Colonic mucosa (tissue), 4 donors: ENCODE measurements at regions of chr17 and their contacts with region 1.

Region 1: DNA sequence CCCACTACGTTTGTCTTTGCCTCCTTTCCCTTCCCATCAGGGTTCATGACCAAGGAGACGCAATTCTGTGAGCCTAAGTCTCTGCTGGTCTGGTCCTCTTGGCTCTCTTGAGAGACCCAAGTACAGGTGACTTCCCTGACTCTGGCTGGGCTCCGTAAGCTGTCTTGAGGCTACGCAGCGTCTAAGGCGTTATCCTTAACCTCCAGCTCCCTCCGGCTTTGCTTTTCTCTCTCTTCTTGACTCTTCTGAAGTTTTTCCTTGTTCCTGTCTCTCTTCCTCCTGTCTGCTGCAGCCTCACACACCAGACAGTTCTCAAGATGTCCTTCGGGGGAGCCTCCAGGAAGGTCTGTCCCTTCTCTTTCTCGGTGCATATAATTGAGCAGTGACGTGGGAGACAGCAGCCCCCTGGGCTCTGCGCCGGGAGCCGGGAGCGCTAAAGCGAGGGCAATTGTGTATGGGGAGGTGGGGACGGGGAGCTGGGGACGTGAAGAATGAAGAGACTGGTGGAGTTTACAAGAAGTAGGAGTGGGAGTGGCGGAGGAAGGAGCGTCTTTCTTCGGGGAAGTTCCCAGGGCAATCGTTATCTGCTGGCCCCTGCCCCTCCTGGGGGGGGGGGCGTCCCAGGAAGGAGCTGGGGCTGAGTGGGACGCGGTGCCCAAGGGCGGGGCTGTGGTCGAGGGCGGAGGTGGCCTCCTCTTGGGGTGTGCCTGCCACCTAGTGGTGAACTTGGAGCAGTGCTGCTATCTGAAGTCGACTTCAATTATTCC is 6.9 kb upstream of the PIRT start:
- DNase-seq: peak; percentile 90
- H3K4me3 ChIP-seq: peak overlapping the region; percentile 38
- H3K27ac ChIP-seq: peak overlapping the region; percentile 85
- H3K4me1 ChIP-seq: no peaks in the 10 kb centered on the region
- H3K27me3 ChIP-seq: no peaks in the 10 kb centered on the region
- CTCF ChIP-seq: peak; percentile 96

Region 2: DNA sequence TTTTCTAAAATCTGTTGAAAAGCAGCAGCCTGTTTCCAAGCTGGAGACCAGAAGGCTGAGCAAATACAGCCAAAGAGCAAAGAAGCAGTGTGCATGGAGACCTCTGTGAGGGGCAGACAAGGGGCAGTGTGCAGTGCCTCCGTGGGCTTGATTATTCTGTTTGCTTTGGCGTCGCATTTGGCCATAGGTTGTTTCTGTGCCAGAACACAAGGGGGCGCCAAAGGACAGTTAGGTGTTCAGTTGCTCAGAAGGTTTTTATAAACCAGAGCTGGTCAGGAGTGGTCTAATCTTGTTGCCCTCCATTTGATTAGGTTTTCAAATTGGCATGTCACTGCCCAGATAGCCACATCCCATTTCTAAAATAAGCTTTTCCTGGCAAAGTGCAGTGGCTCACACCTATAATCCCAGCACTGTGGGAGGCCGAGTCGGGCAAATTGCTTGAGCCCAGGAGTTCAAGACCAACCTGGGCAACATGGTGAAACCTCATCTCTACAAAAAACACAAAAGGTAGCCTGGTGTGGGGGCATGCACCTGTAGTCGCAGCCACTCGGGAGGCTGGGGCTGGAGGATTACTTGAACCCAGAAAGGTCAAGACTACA is 198.3 kb before region 1 on chr17:
- intact Hi-C with region 1: loop called (anchors 5 kb)
- DNase-seq: peak; percentile 74
- H3K4me3 ChIP-seq: no peak overlapping the region
- H3K27ac ChIP-seq: no peak overlapping the region
- H3K4me1 ChIP-seq: no peaks in the 10 kb centered on the region
- H3K27me3 ChIP-seq: no peaks in the 10 kb centered on the region
- CTCF ChIP-seq: peak; percentile 78

Region 3: DNA sequence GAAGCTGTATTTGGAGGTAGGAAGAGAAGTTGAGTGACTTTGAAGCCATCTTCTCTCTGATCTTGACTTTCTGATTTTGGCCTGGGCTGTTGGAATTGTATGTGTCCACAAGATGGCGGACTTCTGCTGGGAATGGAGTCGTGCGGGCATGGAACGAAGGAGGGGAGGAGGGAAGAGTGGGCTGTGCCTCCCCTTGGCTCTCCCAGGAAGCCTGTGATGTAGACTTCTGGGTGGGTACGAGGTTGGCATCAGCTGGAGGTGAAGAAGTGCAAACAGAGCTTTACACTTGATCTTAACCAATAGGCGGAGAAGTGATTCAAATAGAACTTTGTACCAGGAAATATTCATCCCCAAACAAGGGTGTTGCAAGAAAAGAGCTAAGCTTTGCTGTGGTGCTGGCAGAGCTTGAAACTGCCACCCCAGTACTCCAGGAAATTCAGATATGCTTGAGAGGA is 107.6 kb before region 1 on chr17:
- intact Hi-C with region 1: loop called (anchors 1 kb)
- DNase-seq: peak; percentile 91
- H3K4me3 ChIP-seq: no peak overlapping the region
- H3K27ac ChIP-seq: peak overlapping the region; percentile 92
- H3K4me1 ChIP-seq: peaks cover 2% of the 10 kb centered on the region
- H3K27me3 ChIP-seq: no peaks in the 10 kb centered on the region
- CTCF ChIP-seq: peak; percentile 76

Region 4: GRCh38 chr17:10768750-10769251 is 76.0 kb before region 1 on chr17:
- intact Hi-C with region 1: loop called (anchors 5 kb)
- DNase-seq: no peak
- H3K4me3 ChIP-seq: no peak overlapping the region
- H3K27ac ChIP-seq: no peak overlapping the region
- H3K4me1 ChIP-seq: no peaks in the 10 kb centered on the region
- H3K27me3 ChIP-seq: no peaks in the 10 kb centered on the region
- CTCF ChIP-seq: no peak

Region 5: DNA sequence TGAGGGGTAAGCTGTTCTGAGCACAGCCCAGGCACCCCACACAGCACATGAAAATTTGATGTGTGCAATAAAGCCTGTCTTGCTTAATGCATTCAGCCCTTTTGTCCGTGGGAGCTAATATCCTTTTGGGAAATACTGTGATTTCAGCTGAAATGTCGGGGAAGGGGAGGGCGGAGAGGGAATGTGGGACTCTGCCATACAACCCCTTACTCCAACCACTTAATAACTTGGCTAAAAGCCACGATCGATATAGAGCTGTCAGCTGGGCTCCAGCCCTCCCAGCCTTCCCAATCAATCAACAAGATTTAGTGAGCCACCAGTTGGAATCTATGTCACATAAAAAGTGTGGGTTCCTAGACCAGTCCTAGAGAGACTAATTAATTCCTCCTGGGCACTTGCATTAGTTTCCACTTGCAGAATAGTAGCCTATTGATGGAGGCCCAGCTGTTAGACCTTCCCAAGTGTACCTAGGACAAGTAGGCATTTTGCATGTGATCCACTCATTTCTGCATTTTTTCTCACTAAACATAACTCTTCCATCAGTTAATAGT is 75.8 kb after region 1 on chr17:
- intact Hi-C with region 1: no loop called
- DNase-seq: no peak
- H3K4me3 ChIP-seq: no peak overlapping the region
- H3K27ac ChIP-seq: no peak overlapping the region
- H3K4me1 ChIP-seq: no peaks in the 10 kb centered on the region
- H3K27me3 ChIP-seq: no peaks in the 10 kb centered on the region
- CTCF ChIP-seq: no peak